Activated CD8-positive, alpha-beta T cell treated with anti-CD3 and anti-CD28 coated beads for 36 hours (primary cell): ENCODE measurements at regions of chr13 and their contacts with region 1.

Region 1: DNA sequence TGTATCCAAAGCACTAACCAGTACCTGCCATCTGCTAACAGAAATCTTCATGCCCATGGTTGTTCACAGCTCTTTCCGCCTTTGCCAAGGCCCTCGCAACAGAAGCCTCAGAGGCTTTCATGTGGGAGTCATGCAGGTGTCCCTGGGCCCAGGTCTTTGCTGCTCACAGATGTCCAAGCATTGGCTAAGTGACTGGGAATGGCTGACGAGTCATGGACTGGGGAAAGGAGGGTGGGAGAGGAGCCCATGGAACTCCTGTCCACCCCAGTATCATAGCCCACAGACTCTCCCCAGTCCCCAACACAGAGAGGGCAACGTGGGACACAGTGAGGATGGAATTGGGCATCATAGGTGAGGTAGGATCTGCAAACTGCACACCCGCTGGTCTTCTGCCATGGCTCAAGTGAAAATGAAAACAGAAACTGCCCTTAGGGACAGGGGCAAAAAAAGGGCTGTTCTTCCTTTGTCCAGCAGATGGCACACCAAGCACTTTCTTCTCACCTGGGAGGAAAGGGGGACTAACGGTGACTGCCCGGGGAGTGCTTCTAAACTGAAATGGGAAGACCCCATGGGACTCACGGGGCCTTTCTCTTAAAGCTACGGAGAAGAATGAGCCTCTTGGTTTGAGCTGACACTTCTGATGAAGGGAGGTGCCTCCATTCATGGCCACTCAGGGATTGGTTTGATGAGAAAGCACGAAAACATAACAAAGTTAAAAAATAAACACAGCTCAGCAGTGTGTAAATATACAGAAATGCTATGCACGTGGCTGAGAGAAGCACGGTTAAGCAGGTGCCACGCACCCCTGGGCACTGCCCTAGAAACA is 11.1 kb upstream of the DHRS12 start:
- DNase-seq: peak; percentile 87
- ATAC-seq: peak; percentile 74
- H3K4me3 Mint-ChIP-seq: peak overlapping the region; percentile 53
- H3K27ac Mint-ChIP-seq: peak overlapping the region; percentile 87
- H3K4me1 Mint-ChIP-seq: peaks cover 74% of the 10 kb centered on the region
- H3K27me3 Mint-ChIP-seq: no peaks in the 10 kb centered on the region
- CTCF ChIP-seq: peak; percentile 76

Region 2: GRCh38 chr13:51704399-51705313 is 110.4 kb before region 1 on chr13:
- CTCF ChIA-PET with region 1: no interaction called
- POLR2A ChIA-PET with region 1: no interaction called
- intact Hi-C with region 1: no loop called
- DNase-seq: no peak
- ATAC-seq: no peak
- H3K4me3 Mint-ChIP-seq: no peak overlapping the region
- H3K27ac Mint-ChIP-seq: no peak overlapping the region
- H3K4me1 Mint-ChIP-seq: no peaks in the 10 kb centered on the region
- H3K27me3 Mint-ChIP-seq: no peaks in the 10 kb centered on the region
- CTCF ChIP-seq: no peak

Region 3: DNA sequence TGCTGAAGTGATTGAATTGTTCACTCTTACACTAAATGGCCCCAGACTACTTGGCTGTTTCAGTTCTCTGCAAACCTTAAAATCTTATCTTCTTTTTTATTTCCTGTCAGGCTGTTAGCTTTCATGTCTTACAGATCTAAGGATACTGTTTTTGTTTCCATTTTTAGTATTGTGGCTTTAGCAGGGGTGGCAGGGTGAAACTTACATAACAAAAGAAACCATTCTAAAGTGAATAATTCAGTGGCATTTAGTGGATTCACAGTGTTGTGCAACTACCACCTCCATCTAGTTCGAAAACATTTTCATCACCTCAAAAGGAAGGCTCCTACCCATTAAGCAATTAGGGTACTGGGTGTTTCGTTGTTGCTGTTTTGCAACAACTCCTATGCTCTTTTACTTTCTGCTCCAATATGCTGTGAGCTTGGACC is 10.1 kb after region 1 on chr13:
- CTCF ChIA-PET with region 1: interaction called, 119 read pairs
- POLR2A ChIA-PET with region 1: interaction called, 10 read pairs
- intact Hi-C with region 1: no loop called
- DNase-seq: no peak
- ATAC-seq: peak; percentile 26
- H3K4me3 Mint-ChIP-seq: peak overlapping the region; percentile 74
- H3K27ac Mint-ChIP-seq: peak overlapping the region; percentile 94
- H3K4me1 Mint-ChIP-seq: peaks cover 85% of the 10 kb centered on the region
- H3K27me3 Mint-ChIP-seq: no peaks in the 10 kb centered on the region
- CTCF ChIP-seq: no peak

Region 4: DNA sequence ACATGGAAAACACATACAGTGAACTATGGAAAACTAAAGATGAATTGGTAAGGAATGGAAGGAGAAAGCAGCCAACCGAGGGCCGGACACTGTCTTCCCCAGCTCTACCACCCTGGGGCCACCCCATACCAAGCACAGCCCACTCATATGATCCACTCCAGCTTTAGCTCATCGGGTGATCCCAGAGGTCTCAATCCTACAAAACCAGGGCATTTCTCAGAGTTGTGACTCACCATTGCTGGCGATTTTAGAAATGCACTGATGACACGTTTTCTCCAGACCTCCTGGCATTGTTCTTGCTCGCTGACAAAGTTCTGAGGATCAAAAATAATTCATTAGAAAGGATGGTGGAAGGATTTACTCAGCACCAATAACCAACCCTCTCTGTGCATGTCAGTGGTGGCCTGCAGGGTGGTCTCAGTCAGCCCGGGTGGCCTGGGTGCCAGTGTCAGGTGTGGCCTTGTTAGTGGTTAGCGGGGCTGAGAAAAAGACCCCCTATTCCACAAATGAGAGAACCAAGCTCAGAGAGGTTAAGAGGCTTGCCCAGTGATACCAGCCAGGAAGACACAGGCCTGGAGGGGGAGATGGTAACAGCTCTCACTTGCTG is 23.3 kb after region 1 on chr13:
- CTCF ChIA-PET with region 1: interaction called, 150 read pairs
- POLR2A ChIA-PET with region 1: interaction called, 4 read pairs
- intact Hi-C with region 1: loop called (anchors 2 kb)
- DNase-seq: peak; percentile 48
- ATAC-seq: peak; percentile 79
- H3K4me3 Mint-ChIP-seq: no peak overlapping the region
- H3K27ac Mint-ChIP-seq: no peak overlapping the region
- H3K4me1 Mint-ChIP-seq: peaks cover 31% of the 10 kb centered on the region
- H3K27me3 Mint-ChIP-seq: no peaks in the 10 kb centered on the region
- CTCF ChIP-seq: no peak

Region 5: GRCh38 chr13:51861723-51862300 is 46.8 kb after region 1 on chr13 and contains the start of gene CCDC70:
- CTCF ChIA-PET with region 1: interaction called, 17 read pairs
- POLR2A ChIA-PET with region 1: no interaction called
- intact Hi-C with region 1: no loop called
- DNase-seq: peak; percentile 70
- ATAC-seq: peak; percentile 94
- H3K4me3 Mint-ChIP-seq: peak within 1 kb of the TSS; percentile 23
- H3K27ac Mint-ChIP-seq: peak within 1 kb of the TSS; percentile 46
- H3K4me1 Mint-ChIP-seq: peaks cover 22% of the 10 kb centered on the region
- H3K27me3 Mint-ChIP-seq: peaks cover 7% of the 10 kb centered on the region
- CTCF ChIP-seq: no peak
- total RNA-seq, gene CCDC70: 0.45 to 0.72 TPM

Region 6: GRCh38 chr13:52128714-52129700 is 314.0 kb after region 1 on chr13 and contains the start of gene NEK5:
- CTCF ChIA-PET with region 1: interaction called, 18 read pairs
- POLR2A ChIA-PET with region 1: no interaction called
- intact Hi-C with region 1: loop called (anchors 5 kb)
- DNase-seq: peak; percentile 59
- ATAC-seq: peak; percentile 84
- H3K4me3 Mint-ChIP-seq: peak within 1 kb of the TSS; percentile 78
- H3K27ac Mint-ChIP-seq: no peak within 1 kb of the TSS
- H3K4me1 Mint-ChIP-seq: peaks cover 15% of the 10 kb centered on the region
- H3K27me3 Mint-ChIP-seq: peaks cover 17% of the 10 kb centered on the region
- CTCF ChIP-seq: peak; percentile 69
- total RNA-seq, gene NEK5: 0.11 to 0.16 TPM